Naive thymus-derived CD8-positive, alpha-beta T cell (primary cell): ENCODE measurements at regions of chr9 and their contacts with region 1.

Region 1: GRCh38 chr9:131253891-131254491 is 22.3 kb downstream of the FAM78A start:
- DNase-seq: no peak
- ATAC-seq: no peak
- H3K4me3 Mint-ChIP-seq: peak overlapping the region in 9 of 10 donors; percentile 27 to 84 (median 52)
- H3K27ac Mint-ChIP-seq: peak overlapping the region; percentile 11 to 99 (median 97)
- H3K4me1 Mint-ChIP-seq: peaks cover 18 to 76% (median 58%) of the 10 kb centered on the region in 4 donors
- H3K27me3 Mint-ChIP-seq: peaks cover 0 to 2% (median 0%) of the 10 kb centered on the region in 5 donors

Region 2: DNA sequence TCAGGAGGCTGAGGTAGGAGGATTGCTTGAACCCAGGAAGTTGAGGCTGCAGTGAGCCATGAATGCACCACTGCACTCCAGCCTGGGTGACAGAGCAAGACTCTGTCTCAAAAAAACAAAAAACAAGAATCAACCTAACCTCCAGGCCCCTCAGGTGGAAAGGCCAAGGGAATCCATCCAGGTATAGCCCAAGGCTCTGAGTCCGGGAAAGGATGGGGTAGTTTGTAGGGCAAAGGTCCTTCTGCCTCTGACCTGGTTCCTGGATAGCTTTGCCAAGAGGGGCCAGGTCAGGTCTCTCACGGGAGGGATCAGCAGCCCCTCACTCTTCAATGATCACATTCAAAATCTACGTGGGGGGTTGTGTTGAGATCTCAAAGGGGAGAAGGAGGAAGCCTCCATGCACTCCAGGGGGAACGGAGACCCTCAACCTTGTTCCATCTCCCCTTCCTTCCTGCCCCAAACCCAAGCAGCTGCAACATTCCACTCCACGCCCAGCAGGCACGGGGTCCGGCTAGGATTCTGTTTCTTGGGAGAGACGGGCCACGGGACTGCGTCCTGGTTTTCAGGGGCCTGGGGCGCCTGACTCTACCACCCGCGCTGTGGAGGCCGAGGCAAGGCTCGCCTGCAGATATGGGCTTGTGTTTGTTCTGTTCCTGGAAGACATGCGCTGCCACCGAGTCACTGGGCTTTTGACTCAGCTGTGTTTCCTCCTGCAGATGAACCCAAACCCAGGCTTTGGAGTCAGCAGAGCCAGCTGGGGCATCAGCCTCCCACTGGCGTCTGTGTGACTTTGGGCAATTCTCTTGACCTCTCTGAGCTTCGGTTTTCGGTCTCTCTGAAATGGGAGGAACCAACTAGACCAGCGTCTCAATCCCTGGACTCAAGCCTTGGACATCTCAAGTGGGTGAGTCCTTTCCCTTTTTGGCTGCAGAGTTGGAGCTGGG is 71.0 kb after region 1 on chr9:
- POLR2A ChIA-PET with region 1: no interaction called
- DNase-seq: no peak
- ATAC-seq: no peak
- H3K4me3 Mint-ChIP-seq: no peak overlapping the region
- H3K27ac Mint-ChIP-seq: no peak overlapping the region
- H3K4me1 Mint-ChIP-seq: no peaks in the 10 kb centered on the region
- H3K27me3 Mint-ChIP-seq: no peaks in the 10 kb centered on the region

Region 3: DNA sequence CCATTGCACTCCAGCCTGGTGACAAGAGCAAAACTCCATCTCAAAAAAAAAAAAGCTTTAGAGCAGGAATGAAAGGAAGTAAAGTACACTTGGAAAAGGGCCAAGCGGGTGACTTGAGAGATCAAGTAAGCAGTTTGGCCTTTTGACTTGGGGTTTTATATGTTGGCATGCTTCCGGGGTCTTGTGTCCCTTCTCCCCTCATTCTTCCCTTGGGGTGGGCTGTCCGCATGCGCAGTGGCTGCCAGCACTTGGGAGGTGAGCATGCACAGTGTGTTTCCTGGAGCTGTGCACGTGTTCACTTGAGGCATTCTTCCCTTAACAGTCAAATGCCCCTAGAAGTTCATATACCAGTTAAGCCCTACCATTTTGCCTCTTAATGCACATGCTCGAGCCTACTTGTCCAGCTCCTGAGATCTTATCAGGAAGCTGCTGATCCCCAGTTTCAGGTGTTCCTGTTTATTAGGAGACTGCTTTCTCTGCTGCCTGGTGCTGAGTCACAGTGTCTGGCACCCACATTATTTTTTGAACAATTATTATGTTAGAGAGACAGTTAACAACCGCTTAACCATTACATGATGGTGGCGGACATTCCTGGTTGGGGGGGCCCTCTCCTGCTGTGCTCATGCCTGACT is 107.3 kb after region 1 on chr9:
- POLR2A ChIA-PET with region 1: interaction called, 12 read pairs
- DNase-seq: peak; percentile 23 to 81 (median 43)
- ATAC-seq: peak; percentile 46 to 50
- H3K4me3 Mint-ChIP-seq: peak overlapping the region; percentile 68 to 89 (median 85)
- H3K27ac Mint-ChIP-seq: peak overlapping the region; percentile 79 to 96 (median 93)
- H3K4me1 Mint-ChIP-seq: peaks cover 17 to 65% (median 36%) of the 10 kb centered on the region in 4 donors
- H3K27me3 Mint-ChIP-seq: no peaks in the 10 kb centered on the region